ENCODE measurements at regions of chr2 and their contacts with region 1.

Region 1: GRCh38 chr2:217785544-217786045 is 217.2 kb downstream of the TNS1 start:
- DNase-seq: peak; percentile 55
- ATAC-seq: peak; percentile 68
- H3K4me3 ChIP-seq: no peak overlapping the region; a peak in 1 of 6 replicates
- H3K27ac ChIP-seq: no peak overlapping the region
- H3K4me1 ChIP-seq: peaks cover 41% of the 10 kb centered on the region
- H3K27me3 ChIP-seq: no peaks in the 10 kb centered on the region
- CTCF ChIP-seq: peak; percentile 99
- EP300 ChIP-seq: no peak
- POLR2A ChIP-seq: peak in 1 of 2 experiments; percentile 27; a peak in 1 of 4 replicates
- RAD21 ChIP-seq: peak; percentile 95

Region 2: DNA sequence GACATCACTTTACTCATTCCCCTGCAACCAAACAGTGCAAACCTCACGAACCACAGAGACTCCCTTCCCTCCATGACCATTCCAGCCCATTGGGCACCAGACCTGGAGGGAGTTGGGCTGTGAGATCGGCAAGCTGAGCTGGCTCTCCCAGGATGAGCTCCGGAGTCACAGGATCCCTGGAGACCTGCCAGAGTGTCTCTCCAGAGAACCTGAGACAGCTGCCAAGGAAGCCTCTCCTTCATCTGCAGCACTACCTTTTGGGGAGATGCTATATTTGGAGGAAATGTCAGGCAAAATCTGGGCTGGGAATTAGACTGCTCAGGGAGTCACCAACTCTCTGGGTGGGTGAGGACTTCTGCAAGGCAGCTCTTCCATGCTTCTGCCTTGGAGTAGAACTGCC is 200.2 kb before region 1 on chr2:
- CTCF ChIA-PET with region 1: no interaction called
- POLR2A ChIA-PET with region 1: no interaction called
- in situ Hi-C with region 1: no loop called
- intact Hi-C with region 1: no loop called
- DNase-seq: no peak
- ATAC-seq: no peak
- H3K4me3 ChIP-seq: no peak overlapping the region
- H3K27ac ChIP-seq: no peak overlapping the region
- H3K4me1 ChIP-seq: no peaks in the 10 kb centered on the region
- H3K27me3 ChIP-seq: peaks cover 0 to 13% of the 10 kb centered on the region in 2 experiments; a peak in 1 of 5 replicates
- CTCF ChIP-seq: no peak
- EP300 ChIP-seq: no peak
- POLR2A ChIP-seq: no peak
- RAD21 ChIP-seq: no peak

Region 3: GRCh38 chr2:217713395-217714286 is 72.0 kb before region 1 on chr2:
- CTCF ChIA-PET with region 1: no interaction called
- POLR2A ChIA-PET with region 1: no interaction called
- in situ Hi-C with region 1: no loop called
- intact Hi-C with region 1: no loop called
- DNase-seq: peak; percentile 55
- ATAC-seq: peak; percentile 89
- H3K4me3 ChIP-seq: no peak overlapping the region
- H3K27ac ChIP-seq: no peak overlapping the region
- H3K4me1 ChIP-seq: no peaks in the 10 kb centered on the region
- H3K27me3 ChIP-seq: peaks cover 2 to 41% of the 10 kb centered on the region in 2 experiments; a peak in 3 of 5 replicates
- CTCF ChIP-seq: peak; percentile 97
- EP300 ChIP-seq: no peak
- POLR2A ChIP-seq: no peak
- RAD21 ChIP-seq: peak; percentile 93

Region 4: DNA sequence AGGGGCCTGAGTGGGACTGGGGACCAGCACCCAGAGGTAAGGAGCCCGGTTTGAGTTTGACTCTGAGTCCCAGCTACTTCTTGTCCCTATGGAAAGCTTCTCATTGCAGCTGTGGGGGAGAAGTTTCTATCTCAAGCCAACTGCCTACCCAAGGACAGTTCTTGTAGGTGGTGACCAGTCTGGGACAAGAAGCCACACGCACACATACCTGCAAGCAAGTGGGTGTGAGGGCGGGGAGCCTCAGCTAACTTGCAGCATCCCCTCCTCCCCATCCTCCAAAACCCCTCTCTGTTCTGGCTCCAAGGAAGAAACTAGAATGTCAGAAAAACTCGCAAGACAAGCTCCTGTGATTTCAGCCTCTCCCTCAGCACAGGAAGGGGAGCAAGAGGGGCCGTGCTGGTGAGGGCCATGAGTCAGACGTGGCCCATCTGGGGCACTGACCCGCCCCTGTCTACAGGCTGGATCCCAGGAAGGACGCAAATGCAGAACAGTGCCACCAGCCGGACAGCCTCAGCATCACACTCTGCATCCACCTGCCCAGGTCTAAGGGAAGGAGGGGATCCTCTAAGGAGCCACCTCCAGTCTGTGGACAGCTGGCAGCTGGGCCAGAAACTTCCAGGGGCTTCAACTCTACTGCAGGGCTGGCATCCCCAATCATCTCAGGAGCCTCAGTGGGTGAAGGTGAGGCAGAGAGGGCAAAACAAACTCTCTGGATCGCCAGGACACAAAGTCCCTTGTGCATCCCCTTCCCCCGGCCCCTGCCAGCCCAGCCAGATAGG is 113.8 kb after region 1 on chr2:
- CTCF ChIA-PET with region 1: interaction called, 9 read pairs
- POLR2A ChIA-PET with region 1: interaction called, 10 read pairs
- in situ Hi-C with region 1: loop called (anchors 5 kb)
- intact Hi-C with region 1: loop called (anchors 5 kb)
- DNase-seq: peak; percentile 86
- ATAC-seq: peak; percentile 55
- H3K4me3 ChIP-seq: peak overlapping the region; percentile 48 to 63 (median 62); a peak in 5 of 6 replicates
- H3K27ac ChIP-seq: peak overlapping the region; percentile 89
- H3K4me1 ChIP-seq: peaks cover 69% of the 10 kb centered on the region
- H3K27me3 ChIP-seq: no peaks in the 10 kb centered on the region
- CTCF ChIP-seq: peak; percentile 94
- EP300 ChIP-seq: no peak
- POLR2A ChIP-seq: no peak
- RAD21 ChIP-seq: peak; percentile 80

Region 5: GRCh38 chr2:217988014-217988839 is 202.6 kb after region 1 on chr2:
- CTCF ChIA-PET with region 1: interaction called, 106 read pairs
- POLR2A ChIA-PET with region 1: interaction called, 6 read pairs
- in situ Hi-C with region 1: loop called (anchors 5 kb)
- intact Hi-C with region 1: loop called (anchors 1 kb)
- DNase-seq: peak; percentile 58
- ATAC-seq: peak; percentile 87
- H3K4me3 ChIP-seq: no peak overlapping the region; a peak in 1 of 6 replicates
- H3K27ac ChIP-seq: no peak overlapping the region
- H3K4me1 ChIP-seq: peaks cover 10% of the 10 kb centered on the region
- H3K27me3 ChIP-seq: peaks cover 4 to 16% of the 10 kb centered on the region in 2 experiments; a peak in 2 of 5 replicates
- CTCF ChIP-seq: peak; percentile 96
- EP300 ChIP-seq: no peak
- POLR2A ChIP-seq: no peak
- RAD21 ChIP-seq: peak; percentile 95

Region 6: GRCh38 chr2:218033590-218034496 is 248.2 kb after region 1 on chr2:
- CTCF ChIA-PET with region 1: interaction called, 21 read pairs
- POLR2A ChIA-PET with region 1: no interaction called
- in situ Hi-C with region 1: loop called (anchors 5 kb)
- intact Hi-C with region 1: loop called (anchors 1 kb)
- DNase-seq: no peak
- ATAC-seq: peak; percentile 51
- H3K4me3 ChIP-seq: no peak overlapping the region; a peak in 1 of 6 replicates
- H3K27ac ChIP-seq: no peak overlapping the region
- H3K4me1 ChIP-seq: peaks cover 8% of the 10 kb centered on the region
- H3K27me3 ChIP-seq: peaks cover 11 to 69% of the 10 kb centered on the region in 2 experiments
- CTCF ChIP-seq: no peak
- EP300 ChIP-seq: no peak
- POLR2A ChIP-seq: no peak
- RAD21 ChIP-seq: no peak